ENCODE measurements at regions of chr17 and their contacts with region 1.

Region 1: DNA sequence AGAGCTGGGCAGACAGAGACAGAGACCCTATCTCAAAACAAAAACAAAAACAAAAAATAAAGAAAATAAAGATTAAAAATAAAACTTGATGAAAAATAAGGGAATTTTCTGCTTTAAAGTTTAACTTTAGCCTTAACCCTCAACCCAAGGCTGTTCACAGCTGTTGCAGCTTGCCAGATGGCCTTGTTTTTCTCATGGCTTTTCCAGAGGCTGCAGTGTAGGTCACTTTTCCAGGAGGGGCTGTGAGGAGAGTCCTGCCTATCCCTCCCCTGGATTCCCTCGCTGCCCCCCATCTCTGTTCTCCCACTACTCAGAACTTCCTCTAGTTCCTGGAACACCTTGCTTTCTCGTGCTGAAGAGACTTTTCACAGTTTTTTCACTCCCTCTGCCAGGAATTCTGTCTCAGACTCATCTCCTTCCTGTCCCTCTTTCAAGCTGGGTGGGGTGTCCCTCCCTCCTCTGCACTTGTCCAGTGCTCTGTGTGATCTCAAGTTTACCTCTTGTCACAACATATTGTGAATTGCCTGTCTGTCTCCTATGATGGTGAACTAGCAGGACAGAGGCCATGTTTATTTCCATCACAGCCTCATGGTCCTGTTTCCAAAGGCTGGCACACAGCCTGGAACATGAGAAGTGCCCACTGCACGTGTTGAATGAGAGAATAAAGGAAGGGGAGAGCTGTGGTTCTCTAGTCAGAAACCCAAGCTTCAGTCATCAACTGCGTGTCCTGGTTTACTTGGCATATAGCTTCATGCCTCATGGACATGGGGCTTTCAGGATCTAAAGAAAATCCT is 69.9 kb upstream of the MSI2 start:
- DNase-seq: no peak
- H3K4me3 ChIP-seq: no peak overlapping the region
- H3K27ac ChIP-seq: no peak overlapping the region
- H3K4me1 ChIP-seq: no peaks in the 10 kb centered on the region
- H3K27me3 ChIP-seq: no peaks in the 10 kb centered on the region
- CTCF ChIP-seq: no peak
- POLR2A ChIP-seq: no peak

Region 2: DNA sequence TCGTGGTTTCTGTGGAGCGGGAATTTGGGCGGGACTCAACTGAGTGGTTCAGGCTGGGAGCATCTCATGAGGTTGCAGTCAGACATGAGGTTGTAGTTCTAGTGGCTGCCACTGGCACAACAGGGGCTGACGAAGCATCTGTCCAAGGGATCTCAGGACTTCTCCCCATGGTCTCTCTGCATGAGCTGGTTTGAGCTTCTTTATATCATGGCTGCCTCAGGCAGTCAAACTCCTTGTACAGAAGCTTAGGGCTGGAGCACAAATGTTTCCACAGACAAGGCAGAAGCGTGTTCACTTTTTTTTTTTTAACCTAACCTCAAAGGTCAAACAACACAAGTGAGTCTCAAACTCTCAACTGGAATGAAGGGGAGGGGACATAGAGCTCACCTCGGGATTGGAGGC is 313.2 kb after region 1 on chr17:
- intact Hi-C with region 1: loop called (anchors 5 kb)
- DNase-seq: no peak
- H3K4me3 ChIP-seq: no peak overlapping the region
- H3K27ac ChIP-seq: no peak overlapping the region
- H3K4me1 ChIP-seq: no peaks in the 10 kb centered on the region
- H3K27me3 ChIP-seq: no peaks in the 10 kb centered on the region
- CTCF ChIP-seq: no peak
- POLR2A ChIP-seq: no peak

Measured in breast epithelium (tissue), 4 donors.